A549 (cell line): ENCODE measurements at regions of chr1 and their contacts with region 1.

Region 1: DNA sequence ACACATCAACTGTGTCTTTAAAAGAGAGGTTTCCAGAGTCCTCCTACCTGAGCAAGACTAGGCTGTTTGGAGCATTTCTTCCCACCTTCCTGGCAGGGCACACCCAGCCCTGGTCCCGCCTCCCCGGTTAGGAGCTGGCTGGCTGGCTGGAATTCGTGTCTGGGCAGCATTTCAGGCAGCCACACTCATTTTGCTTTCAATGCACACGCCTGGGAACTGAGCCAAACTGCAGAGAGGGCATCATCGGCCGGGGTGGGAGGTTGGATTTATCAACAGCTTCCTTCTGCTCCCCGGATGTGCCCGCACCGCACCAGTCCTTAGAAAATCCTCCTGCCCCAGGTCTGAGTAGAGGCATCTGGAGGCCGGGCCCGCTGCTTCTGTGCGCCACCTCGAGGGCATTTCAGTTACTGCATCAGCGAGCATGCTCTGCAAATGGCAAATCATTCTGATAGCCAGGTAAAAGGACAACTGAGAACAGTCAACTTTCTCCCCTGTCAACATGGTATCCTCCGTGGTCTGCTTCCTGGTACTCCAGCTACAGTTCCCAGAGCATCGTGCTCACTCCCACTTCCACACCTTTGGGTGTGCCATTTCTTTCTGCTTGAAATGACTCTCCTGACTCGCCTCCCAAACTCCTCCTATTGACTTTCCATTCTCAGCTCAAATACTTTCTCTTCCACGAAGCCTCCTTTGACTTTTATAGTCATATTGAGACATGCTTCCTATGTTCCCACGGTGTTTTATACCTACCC is 20.6 kb downstream of the TCEA3 start:
- DNase-seq: peak; percentile 86 to 94
- ATAC-seq: peak; percentile 97 to 99
- H3K4me3 ChIP-seq: peak overlapping the region; percentile 2; the same call in 2 of the 3 replicates
- H3K27ac ChIP-seq: peak overlapping the region; percentile 68 to 83
- H3K4me1 ChIP-seq: peaks cover 21% of the 10 kb centered on the region
- CTCF ChIP-seq: peak; percentile 78
- EP300 ChIP-seq: no peak; a peak in 1 of 5 replicates
- POLR2A ChIP-seq: no peak
- RAD21 ChIP-seq: peak; percentile 88 to 90

Region 2: DNA sequence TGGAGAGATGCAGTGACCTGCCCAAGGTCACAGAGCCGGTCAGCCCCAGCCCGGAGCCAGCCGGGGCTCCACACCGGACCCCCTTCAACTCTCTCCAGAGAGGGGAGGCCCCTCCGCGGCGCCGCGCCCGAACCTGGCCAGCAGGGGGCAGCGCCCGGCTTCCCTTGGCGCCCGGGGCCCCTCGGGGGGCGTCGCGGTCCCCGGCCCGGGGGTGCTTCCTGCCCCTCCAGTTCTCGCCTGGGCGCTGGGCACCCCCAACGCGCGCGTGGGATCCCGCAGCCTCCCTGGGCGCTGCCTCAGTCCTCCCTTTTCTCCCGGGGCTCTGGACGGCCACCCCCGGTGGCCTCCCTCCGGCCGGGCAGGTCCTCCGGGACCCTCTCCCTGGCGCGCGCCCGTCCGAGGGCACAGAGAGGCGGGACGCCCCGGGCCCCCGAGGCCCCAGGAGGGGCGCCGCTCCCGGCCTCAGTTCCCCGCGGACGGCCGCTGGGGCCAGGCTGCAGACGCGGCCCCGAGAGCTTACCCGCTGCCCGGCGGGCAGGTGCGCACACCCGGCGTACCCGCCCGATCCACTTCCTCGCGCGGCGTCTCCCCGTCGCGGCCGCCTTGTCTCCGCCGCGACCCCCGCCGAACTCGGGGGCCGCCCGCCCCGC is 187.0 kb before region 1 on chr1:
- CTCF ChIA-PET with region 1: interaction called, 10 read pairs
- POLR2A ChIA-PET with region 1: no interaction called
- DNase-seq: no peak
- ATAC-seq: peak; percentile 77 to 85
- H3K4me3 ChIP-seq: peak overlapping the region; percentile 91
- H3K27ac ChIP-seq: peak overlapping the region; percentile 96 to 97
- H3K4me1 ChIP-seq: peaks cover 36% of the 10 kb centered on the region
- CTCF ChIP-seq: peak; percentile 80
- EP300 ChIP-seq: no peak
- POLR2A ChIP-seq: no peak
- RAD21 ChIP-seq: peak; percentile 57 to 86; a peak in 4 of 5 replicates

Region 3: GRCh38 chr1:23249787-23250454 is 154.0 kb before region 1 on chr1:
- CTCF ChIA-PET with region 1: no interaction called
- POLR2A ChIA-PET with region 1: no interaction called
- DNase-seq: no peak
- ATAC-seq: no peak
- H3K4me3 ChIP-seq: no peak overlapping the region
- H3K27ac ChIP-seq: peak overlapping the region in 1 of 2 experiments; percentile 36; a peak in 1 of 6 replicates
- H3K4me1 ChIP-seq: peaks cover 18% of the 10 kb centered on the region
- CTCF ChIP-seq: no peak
- EP300 ChIP-seq: no peak
- POLR2A ChIP-seq: no peak
- RAD21 ChIP-seq: no peak

Region 4: DNA sequence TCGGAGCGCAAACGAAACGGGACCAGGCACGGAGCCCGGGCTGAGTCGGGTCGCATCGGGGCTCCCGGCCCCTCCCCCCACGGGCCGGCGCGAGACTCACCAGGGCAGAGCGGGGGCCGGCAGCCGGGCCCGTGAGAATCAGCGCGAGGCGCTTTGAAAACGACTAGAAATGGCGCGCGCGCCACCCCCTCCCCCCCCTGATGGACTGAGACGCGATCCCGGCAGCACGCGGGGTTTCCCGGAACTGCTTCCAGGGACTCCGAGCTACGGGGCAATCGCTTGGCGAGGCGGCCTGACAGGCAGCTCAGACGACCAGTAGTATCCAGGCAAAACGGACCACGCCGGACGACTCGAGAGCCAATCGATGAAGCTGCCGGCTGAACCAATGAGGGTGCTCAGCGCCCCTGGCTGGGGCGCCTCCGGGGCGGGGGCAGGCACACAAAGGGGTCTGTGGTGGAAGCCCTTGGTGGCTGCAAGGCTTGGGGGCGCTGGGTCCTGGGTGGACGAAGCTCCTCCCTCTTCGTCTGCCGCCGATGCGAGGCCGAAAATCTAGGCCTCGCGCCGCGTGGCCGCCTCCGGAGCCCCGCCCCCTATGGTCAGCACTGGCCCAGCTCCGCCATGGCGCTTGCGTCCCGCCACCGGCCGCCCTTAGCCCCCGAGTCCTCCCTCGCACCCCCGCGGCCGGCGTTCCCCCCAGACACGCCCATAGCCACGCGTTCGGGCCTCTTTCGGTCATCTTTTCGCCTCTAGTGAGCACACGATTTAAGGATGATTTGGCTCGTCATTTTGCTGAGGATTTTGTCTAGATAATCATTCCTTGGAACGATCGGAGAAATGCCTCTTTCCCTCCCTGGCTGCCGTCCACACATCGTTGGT is 59.6 kb before region 1 on chr1 and contains the start of gene HNRNPR:
- CTCF ChIA-PET with region 1: interaction called, 10 read pairs
- POLR2A ChIA-PET with region 1: interaction called, 33 read pairs
- DNase-seq: peak; percentile 90 to 100
- ATAC-seq: peak; percentile 97 to 98
- H3K4me3 ChIP-seq: peak within 1 kb of the TSS; percentile 93
- H3K27ac ChIP-seq: peak within 1 kb of the TSS; percentile 98 to 100
- H3K4me1 ChIP-seq: peaks cover 27% of the 10 kb centered on the region
- CTCF ChIP-seq: no peak
- EP300 ChIP-seq: no peak
- POLR2A ChIP-seq: peak; percentile 60
- RAD21 ChIP-seq: no peak; a peak in 2 of 5 replicates
- polyA plus RNA-seq, gene HNRNPR: 241 and 281 TPM in 2 replicates

Region 5: GRCh38 chr1:23362218-23362713 is 41.6 kb before region 1 on chr1:
- CTCF ChIA-PET with region 1: interaction called, 10 read pairs
- POLR2A ChIA-PET with region 1: no interaction called
- DNase-seq: peak in 1 of 2 experiments; percentile 37
- ATAC-seq: no peak
- H3K4me3 ChIP-seq: no peak overlapping the region
- H3K27ac ChIP-seq: no peak overlapping the region
- H3K4me1 ChIP-seq: no peaks in the 10 kb centered on the region
- CTCF ChIP-seq: no peak
- EP300 ChIP-seq: no peak
- POLR2A ChIP-seq: no peak
- RAD21 ChIP-seq: no peak

Region 6: DNA sequence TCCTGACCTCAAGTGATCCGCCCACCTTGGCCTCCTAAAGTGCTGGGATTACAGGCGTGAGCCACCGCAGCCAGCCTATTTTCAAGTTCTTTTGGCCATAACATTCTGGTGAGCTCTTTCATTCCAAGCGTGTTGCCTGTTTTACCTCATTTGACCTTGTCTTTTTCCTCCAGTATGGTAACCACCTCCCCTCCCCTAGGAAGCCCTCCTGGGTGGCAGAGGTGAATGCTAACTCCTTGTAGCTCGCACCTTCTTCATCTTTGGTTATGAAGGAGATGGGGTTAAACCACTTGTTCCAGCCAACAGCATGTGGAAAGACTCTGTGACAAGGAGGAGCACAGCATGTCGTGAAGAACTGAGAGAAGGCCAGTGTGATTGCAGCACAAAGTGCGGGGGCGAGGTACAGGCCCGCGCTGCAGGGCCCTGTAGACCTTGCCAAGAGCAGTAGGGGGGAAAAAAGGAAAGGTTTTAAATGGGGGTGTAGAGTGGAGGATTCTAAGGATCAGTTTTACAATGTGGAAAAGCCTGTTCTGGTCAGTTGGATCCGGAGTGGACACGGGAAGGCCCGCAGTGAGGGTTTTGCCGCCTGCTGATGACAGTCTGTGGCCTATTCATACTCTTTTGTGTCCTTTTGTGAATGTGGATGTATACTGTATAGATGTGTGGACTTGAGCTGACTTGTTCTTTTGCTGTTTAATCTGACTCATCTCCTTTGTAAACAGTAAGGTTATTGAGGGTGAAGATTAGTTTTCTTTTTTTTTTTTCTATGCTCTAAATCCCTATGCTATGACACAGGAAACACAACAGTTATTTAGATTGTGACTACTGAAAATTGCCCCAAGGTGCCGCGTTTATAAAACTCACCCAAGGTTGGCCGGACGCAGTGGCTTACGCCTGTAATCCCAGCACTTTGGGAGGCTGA is 26.8 kb before region 1 on chr1:
- CTCF ChIA-PET with region 1: interaction called, 28 read pairs
- POLR2A ChIA-PET with region 1: interaction called, 6 read pairs
- DNase-seq: peak; percentile 77 to 91
- ATAC-seq: peak; percentile 97 to 98
- H3K4me3 ChIP-seq: no peak overlapping the region
- H3K27ac ChIP-seq: peak overlapping the region; percentile 86 to 90
- H3K4me1 ChIP-seq: peaks cover 23% of the 10 kb centered on the region
- CTCF ChIP-seq: no peak
- EP300 ChIP-seq: no peak; a peak in 1 of 5 replicates
- POLR2A ChIP-seq: no peak
- RAD21 ChIP-seq: no peak; a peak in 1 of 5 replicates